A549 (cell line): ENCODE measurements at regions of chrX and their contacts with region 1.

Region 1: DNA sequence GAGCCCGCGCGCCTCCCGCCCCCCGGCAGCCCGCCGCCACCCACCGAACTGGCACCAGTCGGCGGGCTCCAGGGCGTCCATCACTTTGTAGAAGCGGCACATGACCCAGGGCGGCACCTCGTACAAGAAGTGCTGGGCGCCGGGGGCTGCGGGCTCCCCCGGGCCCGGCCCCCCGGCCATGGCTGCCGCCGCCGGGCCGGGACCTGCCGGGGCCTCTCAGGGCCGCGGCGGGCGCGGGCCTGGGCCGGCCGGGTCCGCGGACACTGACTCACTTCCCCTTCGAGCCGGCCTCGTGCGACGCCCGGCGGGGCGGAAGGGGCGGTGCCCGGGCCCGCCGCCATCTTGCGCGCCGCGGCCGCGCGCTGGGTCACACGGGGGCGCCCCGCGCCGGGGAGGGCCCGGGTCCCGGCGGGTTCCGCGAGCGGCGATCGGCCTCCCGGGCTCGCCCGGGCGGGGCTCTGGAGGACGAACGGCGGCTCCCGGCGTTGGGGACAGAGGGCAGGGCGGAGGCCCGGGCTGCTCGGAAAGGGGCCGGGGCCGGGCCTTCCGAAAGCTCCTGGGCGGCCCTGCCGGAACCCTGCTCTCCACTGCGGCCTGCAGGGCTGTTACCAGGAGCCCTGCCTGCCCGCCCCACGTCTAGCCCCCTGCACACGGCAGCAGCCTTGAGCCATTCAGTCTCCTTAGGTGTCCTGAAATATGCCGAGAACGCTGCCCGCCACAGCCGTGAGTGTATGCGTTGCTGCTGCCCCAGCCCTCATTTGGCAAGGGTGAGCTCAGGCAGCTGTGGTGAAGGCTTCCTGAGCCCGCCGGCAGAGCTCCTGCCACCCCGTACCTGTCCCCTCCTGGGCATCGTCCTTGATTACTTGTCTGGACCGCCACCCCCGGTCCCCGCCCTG is at the start of gene IRAK1:
- DNase-seq: peak; percentile 47 to 60
- ATAC-seq: peak; percentile 72 to 84
- H3K4me3 ChIP-seq: peak within 1 kb of the TSS; percentile 63
- H3K27ac ChIP-seq: peak within 1 kb of the TSS; percentile 99
- H3K4me1 ChIP-seq: peaks cover 17% of the 10 kb centered on the region
- CTCF ChIP-seq: peak; percentile 31; the same call in 2 of the 3 replicates
- EP300 ChIP-seq: no peak
- POLR2A ChIP-seq: peak; percentile 63
- RAD21 ChIP-seq: no peak
- polyA plus RNA-seq, gene IRAK1: 73.1 and 73.6 TPM in 2 replicates

Region 2: GRCh38 chrX:154046031-154046781 is 26.3 kb after region 1 on chrX:
- CTCF ChIA-PET with region 1: interaction called, 14 read pairs
- POLR2A ChIA-PET with region 1: interaction called, 11 read pairs
- DNase-seq: peak; percentile 21 to 78
- ATAC-seq: peak; percentile 84 to 85
- H3K4me3 ChIP-seq: no peak overlapping the region
- H3K27ac ChIP-seq: peak overlapping the region; percentile 76 to 85
- H3K4me1 ChIP-seq: peaks cover 75% of the 10 kb centered on the region
- CTCF ChIP-seq: peak; percentile 17; the same call in 1 of the 3 replicates
- EP300 ChIP-seq: no peak
- POLR2A ChIP-seq: no peak
- RAD21 ChIP-seq: peak in 1 of 2 experiments; percentile 33; a peak in 2 of 5 replicates